ENCODE measurements at regions of chr1 and their contacts with region 1.

Region 1: GRCh38 chr1:23867953-23868556 is at the start of gene FUCA1:
- DNase-seq: peak; percentile 92 to 95 (median 94)
- ATAC-seq: peak; percentile 95 to 99 (median 99)
- H3K4me3 ChIP-seq: peak within 1 kb of the TSS; percentile 62 to 98 (median 84)
- H3K27ac ChIP-seq: peak within 1 kb of the TSS; percentile 37 to 83 (median 74)
- H3K4me1 ChIP-seq: peaks cover 0 to 48% (median 23%) of the 10 kb centered on the region in 12 donors
- H3K27me3 ChIP-seq: no peaks in the 10 kb centered on the region
- CTCF ChIP-seq: peak; percentile 89 to 99 (median 94)
- POLR2A ChIP-seq: peak in 1 of 2 donors; percentile 82
- total RNA-seq, gene FUCA1: 12.8 to 54.2 (median 16.1) TPM

Region 2: DNA sequence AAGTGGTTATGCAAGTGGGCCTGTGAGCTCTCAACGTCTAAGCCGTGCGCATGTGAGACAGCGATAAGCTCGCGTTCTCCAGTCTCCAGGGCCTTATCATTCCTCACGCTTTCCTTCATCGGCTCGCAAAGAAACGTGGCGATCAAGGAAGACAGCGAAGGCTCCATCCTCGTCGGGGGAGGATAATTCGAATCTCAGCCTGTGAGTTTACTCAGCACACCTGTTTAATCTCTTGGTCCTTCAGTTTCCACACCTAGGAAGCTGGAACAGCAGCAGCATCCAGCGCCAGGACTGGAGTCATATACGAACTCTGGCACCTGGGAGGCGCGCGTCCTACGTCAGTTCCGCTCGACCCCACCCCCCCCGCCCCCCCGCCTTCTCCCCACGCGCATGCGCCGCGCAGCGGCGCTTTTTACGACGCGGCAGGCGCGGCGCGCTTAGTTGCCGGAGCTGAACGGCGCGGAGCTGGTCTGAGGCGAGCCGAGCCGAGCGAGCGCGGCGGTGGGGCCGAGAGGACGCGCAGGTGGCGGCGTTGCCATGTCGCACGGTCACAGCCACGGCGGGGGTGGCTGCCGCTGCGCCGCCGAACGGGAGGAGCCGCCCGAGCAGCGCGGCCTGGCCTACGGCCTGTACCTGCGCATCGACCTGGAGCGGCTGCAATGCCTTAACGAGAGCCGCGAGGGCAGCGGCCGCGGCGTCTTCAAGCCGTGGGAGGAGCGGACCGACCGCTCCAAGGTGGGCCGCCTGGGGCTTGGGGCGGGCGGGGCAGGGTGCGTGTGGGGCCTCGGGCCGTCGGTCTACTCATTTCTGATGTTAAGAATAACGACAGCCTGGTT is 89.9 kb before region 1 on chr1 and contains the start of gene PITHD1:
- intact Hi-C with region 1: loop called in 8 of 10 experiments (anchors 5 to 10 kb)
- DNase-seq: peak; percentile 78 to 90 (median 82)
- ATAC-seq: peak; percentile 87 to 94 (median 90)
- H3K4me3 ChIP-seq: peak within 1 kb of the TSS; percentile 66 to 100 (median 93)
- H3K27ac ChIP-seq: peak within 1 kb of the TSS; percentile 7 to 97 (median 89)
- H3K4me1 ChIP-seq: peaks cover 4 to 44% (median 30%) of the 10 kb centered on the region in 12 donors
- H3K27me3 ChIP-seq: no peaks in the 10 kb centered on the region
- CTCF ChIP-seq: no peak
- POLR2A ChIP-seq: peak; percentile 83 to 89
- total RNA-seq, gene PITHD1: 34.8 to 59.2 (median 46.2) TPM

Region 3: GRCh38 chr1:23809751-23810171 is 58.3 kb before region 1 on chr1:
- intact Hi-C with region 1: loop called in 5 of 10 experiments (anchors 5 to 10 kb)
- DNase-seq: peak; percentile 72 to 85 (median 76)
- ATAC-seq: peak; percentile 67 to 93 (median 85)
- H3K4me3 ChIP-seq: no peak overlapping the region
- H3K27ac ChIP-seq: peak overlapping the region in 1 of 12 donors; percentile 69
- H3K4me1 ChIP-seq: peaks cover 0 to 31% (median 0%) of the 10 kb centered on the region in 12 donors
- H3K27me3 ChIP-seq: no peaks in the 10 kb centered on the region
- CTCF ChIP-seq: peak; percentile 60 to 90 (median 74)
- POLR2A ChIP-seq: no peak

Region 4: GRCh38 chr1:23916209-23917131 is 48.4 kb after region 1 on chr1:
- intact Hi-C with region 1: loop called in 2 of 10 experiments (anchors 2 to 5 kb)
- DNase-seq: peak; percentile 51 to 71 (median 68)
- ATAC-seq: peak; percentile 69 to 85 (median 79)
- H3K4me3 ChIP-seq: no peak overlapping the region
- H3K27ac ChIP-seq: peak overlapping the region in 1 of 12 donors; percentile 64
- H3K4me1 ChIP-seq: peaks cover 0 to 48% (median 6%) of the 10 kb centered on the region in 12 donors
- H3K27me3 ChIP-seq: no peaks in the 10 kb centered on the region
- CTCF ChIP-seq: peak; percentile 24 to 68 (median 56)
- POLR2A ChIP-seq: no peak

Region 5: GRCh38 chr1:24027838-24028468 is 159.9 kb after region 1 on chr1:
- intact Hi-C with region 1: loop called in 2 of 10 experiments (anchors 5 kb)
- DNase-seq: no peak
- ATAC-seq: peak in 3 of 4 donors; percentile 57 to 77 (median 73)
- H3K4me3 ChIP-seq: no peak overlapping the region
- H3K27ac ChIP-seq: no peak overlapping the region
- H3K4me1 ChIP-seq: peaks cover 0 to 10% (median 2%) of the 10 kb centered on the region in 12 donors
- H3K27me3 ChIP-seq: no peaks in the 10 kb centered on the region
- CTCF ChIP-seq: peak; percentile 44 to 81 (median 72)
- POLR2A ChIP-seq: no peak

Measured in heart left ventricle (tissue), 16 donors.